Upper lobe of right lung (tissue), 1 donor: ENCODE measurements at regions of chr20 and their contacts with region 1.

Region 1: GRCh38 chr20:45436732-45437391 is 20.9 kb downstream of the PIGT start:
- DNase-seq: peak; percentile 95
- ATAC-seq: peak; percentile 100
- H3K4me3 ChIP-seq: peak overlapping the region; percentile 57
- H3K27ac ChIP-seq: peak overlapping the region; percentile 75
- H3K4me1 ChIP-seq: no peaks in the 10 kb centered on the region
- H3K27me3 ChIP-seq: no peaks in the 10 kb centered on the region
- CTCF ChIP-seq: peak; percentile 94

Region 2: DNA sequence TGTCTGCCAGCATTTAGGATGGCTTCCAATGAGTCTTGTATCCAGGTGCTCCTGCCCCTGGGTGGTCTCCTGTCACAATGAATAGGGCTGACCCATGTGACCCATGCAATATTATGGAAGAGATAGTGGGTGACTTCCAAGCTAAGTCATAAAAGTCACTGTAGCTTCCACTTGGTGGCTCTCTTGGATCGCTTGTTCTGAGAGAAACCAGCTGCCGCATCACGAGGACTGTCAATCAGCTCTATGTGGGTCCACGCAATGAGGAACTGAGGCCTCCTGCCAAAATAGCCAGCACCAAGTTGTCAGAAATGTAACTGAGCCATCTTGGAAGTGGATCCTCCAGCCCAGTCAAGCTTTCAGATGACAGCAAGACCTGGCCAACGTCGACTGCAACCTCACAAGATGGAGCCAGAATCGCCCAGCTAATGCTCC is 113.9 kb before region 1 on chr20:
- intact Hi-C with region 1: loop called (anchors 5 kb)
- DNase-seq: peak; percentile 73
- ATAC-seq: peak; percentile 83
- H3K4me3 ChIP-seq: no peak overlapping the region
- H3K27ac ChIP-seq: no peak overlapping the region
- H3K4me1 ChIP-seq: no peaks in the 10 kb centered on the region
- H3K27me3 ChIP-seq: no peaks in the 10 kb centered on the region
- CTCF ChIP-seq: peak; percentile 32

Region 3: DNA sequence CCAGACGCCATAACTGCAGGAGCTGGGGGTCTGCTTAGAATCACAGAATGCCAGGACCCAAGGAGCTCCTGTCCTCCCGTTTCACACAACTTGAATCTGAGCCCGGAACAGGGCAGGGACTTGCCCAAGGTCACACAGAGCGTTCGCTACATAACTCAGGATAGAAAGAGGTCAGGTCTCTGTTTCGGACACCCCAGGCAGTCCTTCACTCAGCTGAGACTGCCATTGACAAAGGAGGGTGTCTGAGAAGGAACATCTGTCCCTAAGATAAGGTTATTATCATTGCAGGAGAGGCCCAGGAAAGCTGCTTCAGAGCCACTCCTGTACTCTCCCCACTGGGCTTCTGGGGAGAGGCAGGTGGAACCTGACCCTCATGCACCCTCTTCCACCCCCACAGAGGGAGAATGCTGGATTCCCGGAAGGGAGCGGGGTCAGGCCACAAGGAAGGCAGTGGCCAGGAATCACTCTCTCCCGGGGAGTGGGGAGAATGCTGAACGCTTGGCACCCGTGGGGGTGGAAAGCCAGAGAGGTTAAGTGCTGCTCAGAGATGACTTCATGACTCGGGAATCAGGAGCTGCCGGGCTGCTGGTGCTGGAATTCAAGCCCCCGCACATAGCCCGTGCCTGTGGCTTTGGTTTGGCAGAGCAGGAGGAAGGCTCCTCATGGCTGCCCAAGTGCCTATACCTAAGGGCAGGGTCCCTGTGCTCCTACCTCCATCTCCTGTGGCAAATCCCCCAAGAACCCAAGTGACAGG is 99.3 kb before region 1 on chr20:
- intact Hi-C with region 1: no loop called
- DNase-seq: peak; percentile 83
- ATAC-seq: peak; percentile 58
- H3K4me3 ChIP-seq: no peak overlapping the region
- H3K27ac ChIP-seq: peak overlapping the region; percentile 66
- H3K4me1 ChIP-seq: peaks cover 56% of the 10 kb centered on the region
- H3K27me3 ChIP-seq: no peaks in the 10 kb centered on the region
- CTCF ChIP-seq: no peak

Region 4: GRCh38 chr20:45362804-45363610 is 73.9 kb before region 1 on chr20 and contains the start of gene SYS1:
- intact Hi-C with region 1: loop called (anchors 10 kb)
- DNase-seq: peak; percentile 100
- ATAC-seq: peak; percentile 88
- H3K4me3 ChIP-seq: peak within 1 kb of the TSS; percentile 64
- H3K27ac ChIP-seq: peak within 1 kb of the TSS; percentile 97
- H3K4me1 ChIP-seq: peaks cover 65% of the 10 kb centered on the region
- H3K27me3 ChIP-seq: no peaks in the 10 kb centered on the region
- CTCF ChIP-seq: peak; percentile 82
- total RNA-seq, gene SYS1: 46.5 TPM

Region 5: DNA sequence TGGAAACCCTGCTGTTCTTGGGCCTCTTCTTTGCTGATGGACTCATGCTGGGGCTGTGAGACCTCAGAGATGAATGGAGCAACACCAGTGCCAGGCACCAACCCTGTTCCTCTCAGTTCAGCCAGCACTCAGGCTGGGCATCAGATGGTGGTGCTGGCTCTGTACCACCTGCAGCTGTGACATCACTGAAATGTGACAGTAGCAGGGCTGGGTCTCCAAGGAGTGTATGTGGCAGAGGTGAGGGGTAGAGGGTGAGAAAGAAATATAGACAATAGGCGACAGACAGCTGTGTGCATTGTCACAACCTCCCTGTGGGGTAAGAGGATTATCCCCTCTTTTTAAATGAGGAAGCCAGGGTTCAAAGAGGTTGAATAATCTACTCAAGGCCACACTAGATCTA is 58.7 kb before region 1 on chr20 and contains the start of gene TP53TG5:
- intact Hi-C with region 1: no loop called
- DNase-seq: no peak
- ATAC-seq: no peak
- H3K4me3 ChIP-seq: no peak within 1 kb of the TSS
- H3K27ac ChIP-seq: no peak within 1 kb of the TSS
- H3K4me1 ChIP-seq: peaks cover 3% of the 10 kb centered on the region
- H3K27me3 ChIP-seq: no peaks in the 10 kb centered on the region
- CTCF ChIP-seq: no peak
- total RNA-seq, gene TP53TG5: not detected